Activated B cell treated with CpG ODN at 0.5 μM for 24 hours (primary cell): ENCODE measurements at regions of chr1 and their contacts with region 1.

Region 1: DNA sequence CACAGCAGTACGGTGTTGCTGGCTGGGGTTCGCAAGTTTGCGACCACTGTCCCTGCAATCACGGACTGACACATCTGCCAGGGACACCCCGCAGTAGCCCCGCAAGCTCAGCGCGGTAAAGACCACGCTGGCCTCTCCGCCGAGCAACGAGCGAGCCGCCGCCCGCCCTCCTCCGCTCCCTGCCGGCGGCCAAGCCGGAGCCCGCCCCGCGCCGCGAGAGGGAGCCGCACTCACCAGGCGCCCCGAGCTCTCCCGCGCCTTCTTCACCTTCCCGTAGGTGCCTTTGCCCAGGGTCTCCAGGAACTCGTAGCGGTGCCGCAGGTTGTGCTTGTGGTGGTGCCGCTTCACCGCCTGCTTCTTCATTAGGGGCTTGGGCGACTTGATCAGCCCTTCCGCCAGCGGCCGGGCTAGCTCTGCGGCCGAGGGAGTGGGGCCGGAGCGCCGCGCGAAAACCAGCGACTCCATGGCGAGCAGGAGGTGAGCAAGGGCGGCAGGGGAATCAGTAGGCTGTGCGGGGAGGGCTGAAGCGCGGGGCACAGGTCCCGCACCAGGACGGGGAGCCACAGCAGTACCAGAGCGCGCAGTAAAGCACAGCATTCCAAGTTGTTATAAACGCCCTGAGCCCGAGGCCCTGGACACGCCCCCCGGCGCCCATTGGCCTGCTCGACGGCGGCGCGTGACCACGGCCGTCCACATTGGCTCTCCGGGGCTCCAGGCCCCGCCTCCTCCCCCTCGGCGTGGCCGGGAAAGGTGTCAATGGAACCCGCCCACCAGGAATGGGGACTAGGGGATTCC is at the start of gene NUAK2:
- DNase-seq: peak; percentile 83
- ATAC-seq: peak; percentile 86
- H3K4me3 Mint-ChIP-seq: peak within 1 kb of the TSS; percentile 97
- H3K27ac Mint-ChIP-seq: peak within 1 kb of the TSS; percentile 98
- H3K4me1 Mint-ChIP-seq: peaks cover 78% of the 10 kb centered on the region
- H3K27me3 Mint-ChIP-seq: peaks cover 2% of the 10 kb centered on the region
- CTCF ChIP-seq: no peak
- total RNA-seq, gene NUAK2: 26.1 and 26.2 TPM in 2 replicates

Region 2: DNA sequence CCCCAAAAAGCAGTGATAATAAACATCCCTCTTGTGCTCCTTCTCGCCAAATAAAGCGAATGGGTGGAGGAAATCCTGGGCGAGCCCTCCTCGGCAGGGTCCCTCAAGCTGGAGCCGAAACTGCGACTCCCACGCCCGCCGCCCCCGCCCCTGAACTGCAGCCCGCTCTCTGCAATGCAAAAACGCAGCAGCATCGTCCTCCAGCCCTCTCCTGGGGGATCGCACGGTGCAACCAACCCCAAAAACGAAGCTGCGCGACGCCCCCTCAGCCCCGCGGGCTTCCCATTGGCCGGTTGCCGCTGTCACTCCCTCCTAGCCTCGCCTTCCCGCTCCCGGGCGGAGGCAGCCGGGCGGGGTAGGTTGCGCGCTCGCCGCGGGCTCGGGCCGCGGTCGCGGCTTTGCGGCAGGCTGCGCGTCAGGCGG is 93.8 kb before region 1 on chr1 and contains the start of gene TMCC2:
- CTCF ChIA-PET with region 1: interaction called, 3 read pairs
- POLR2A ChIA-PET with region 1: interaction called, 4 read pairs
- intact Hi-C with region 1: loop called (anchors 5 kb)
- DNase-seq: peak; percentile 73
- ATAC-seq: peak; percentile 88
- H3K4me3 Mint-ChIP-seq: peak within 1 kb of the TSS; percentile 84
- H3K27ac Mint-ChIP-seq: peak within 1 kb of the TSS; percentile 42
- H3K4me1 Mint-ChIP-seq: peaks cover 29% of the 10 kb centered on the region
- H3K27me3 Mint-ChIP-seq: peaks cover 9% of the 10 kb centered on the region
- CTCF ChIP-seq: no peak
- total RNA-seq, gene TMCC2: 1.2 and 1.4 TPM in 2 replicates

Region 3: DNA sequence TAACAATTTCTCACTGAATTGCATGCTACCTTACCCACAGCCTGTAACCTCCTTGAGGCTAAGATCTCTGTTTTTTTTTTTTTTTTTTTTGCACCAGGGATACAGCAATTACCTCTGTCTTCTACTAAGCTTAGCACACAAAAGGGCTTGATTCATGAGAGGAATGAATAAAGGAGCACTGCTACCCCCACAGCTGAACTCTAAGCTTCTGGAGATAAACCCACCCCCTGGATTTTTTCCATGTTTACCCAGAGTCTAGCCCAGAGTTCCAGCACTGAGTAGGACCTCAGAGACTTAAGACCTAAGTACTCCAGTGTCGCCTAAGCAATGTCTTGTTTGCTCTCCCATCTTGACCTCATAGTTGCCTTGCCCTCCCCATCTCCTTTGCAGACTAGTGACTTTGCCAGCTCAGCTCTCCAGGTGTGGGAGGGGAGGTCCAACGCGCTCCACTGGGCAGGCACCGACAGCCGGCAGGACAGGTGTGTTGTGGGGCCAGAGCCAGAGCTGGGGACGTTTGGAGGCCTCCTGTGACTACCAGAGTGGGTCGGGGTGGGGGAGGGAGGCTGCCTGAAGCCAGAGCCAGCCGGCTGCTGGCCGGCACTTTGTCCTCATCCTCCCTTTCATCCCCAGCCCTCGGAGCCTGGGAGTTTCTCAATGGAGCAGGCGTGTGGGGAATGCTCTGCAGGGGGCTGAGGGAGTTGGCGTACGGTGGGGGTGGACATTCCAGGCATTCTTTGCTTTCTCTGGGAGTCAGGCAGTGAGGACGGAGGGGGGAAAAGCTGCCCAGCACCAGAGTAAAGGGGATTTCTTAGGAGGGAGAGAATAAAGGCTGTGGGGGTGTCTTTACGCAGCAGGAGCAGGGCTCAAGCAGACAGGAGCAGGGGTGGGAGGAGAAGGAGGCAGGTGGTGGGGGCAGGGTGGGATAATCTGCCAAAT is 20.2 kb before region 1 on chr1:
- CTCF ChIA-PET with region 1: interaction called, 19 read pairs
- POLR2A ChIA-PET with region 1: interaction called, 1,622 read pairs
- intact Hi-C with region 1: no loop called
- DNase-seq: no peak
- ATAC-seq: peak; percentile 59
- H3K4me3 Mint-ChIP-seq: peak overlapping the region; percentile 46
- H3K27ac Mint-ChIP-seq: peak overlapping the region; percentile 78
- H3K4me1 Mint-ChIP-seq: peaks cover 69% of the 10 kb centered on the region
- H3K27me3 Mint-ChIP-seq: no peaks in the 10 kb centered on the region
- CTCF ChIP-seq: no peak

Region 4: DNA sequence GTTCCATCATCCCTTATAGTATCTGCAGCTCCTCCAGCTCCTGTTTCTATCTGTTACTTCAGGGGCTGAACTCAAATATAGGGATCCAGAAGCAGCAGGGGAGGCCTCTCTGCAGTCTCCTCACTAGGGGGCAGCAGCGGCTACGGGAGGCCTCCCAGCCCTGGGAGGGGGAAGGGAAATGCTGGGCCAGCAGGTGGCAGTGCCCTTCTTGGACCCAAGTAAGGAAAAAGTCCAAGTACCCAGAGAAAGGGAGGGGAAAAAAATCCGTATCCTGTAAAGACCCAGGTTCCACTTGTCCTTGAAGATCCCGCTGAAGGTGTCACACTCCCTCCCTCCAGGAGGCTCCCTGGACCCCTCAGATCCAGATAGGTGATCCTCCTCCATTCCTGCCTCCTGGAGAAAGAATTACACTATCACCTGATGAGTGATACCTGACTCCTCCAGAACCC is 14.3 kb after region 1 on chr1:
- CTCF ChIA-PET with region 1: interaction called, 36 read pairs
- POLR2A ChIA-PET with region 1: no interaction called
- intact Hi-C with region 1: no loop called
- DNase-seq: peak; percentile 70
- ATAC-seq: peak; percentile 84
- H3K4me3 Mint-ChIP-seq: no peak overlapping the region
- H3K27ac Mint-ChIP-seq: no peak overlapping the region
- H3K4me1 Mint-ChIP-seq: peaks cover 6% of the 10 kb centered on the region
- H3K27me3 Mint-ChIP-seq: no peaks in the 10 kb centered on the region
- CTCF ChIP-seq: peak; percentile 84